PC-3 (cell line): ENCODE measurements at regions of chr12 and their contacts with region 1.

Region 1: GRCh38 chr12:55142669-55143565 is 16.7 kb downstream of the OR9K2 start:
- DNase-seq: peak; percentile 78
- ATAC-seq: peak; percentile 66
- H3K4me3 ChIP-seq: no peak overlapping the region
- H3K27ac ChIP-seq: no peak overlapping the region
- H3K4me1 ChIP-seq: no peaks in the 10 kb centered on the region
- H3K27me3 ChIP-seq: peaks cover 16% of the 10 kb centered on the region
- CTCF ChIP-seq: peak; percentile 89

Region 2: GRCh38 chr12:54701940-54702592 is 440.9 kb before region 1 on chr12:
- CTCF ChIA-PET with region 1: no interaction called
- POLR2A ChIA-PET with region 1: no interaction called
- intact Hi-C with region 1: loop called (anchors 2 kb)
- DNase-seq: peak; percentile 61
- ATAC-seq: peak; percentile 75
- H3K4me3 ChIP-seq: no peak overlapping the region
- H3K27ac ChIP-seq: no peak overlapping the region
- H3K4me1 ChIP-seq: no peaks in the 10 kb centered on the region
- H3K27me3 ChIP-seq: peaks cover 65% of the 10 kb centered on the region
- CTCF ChIP-seq: peak; percentile 70

Region 3: DNA sequence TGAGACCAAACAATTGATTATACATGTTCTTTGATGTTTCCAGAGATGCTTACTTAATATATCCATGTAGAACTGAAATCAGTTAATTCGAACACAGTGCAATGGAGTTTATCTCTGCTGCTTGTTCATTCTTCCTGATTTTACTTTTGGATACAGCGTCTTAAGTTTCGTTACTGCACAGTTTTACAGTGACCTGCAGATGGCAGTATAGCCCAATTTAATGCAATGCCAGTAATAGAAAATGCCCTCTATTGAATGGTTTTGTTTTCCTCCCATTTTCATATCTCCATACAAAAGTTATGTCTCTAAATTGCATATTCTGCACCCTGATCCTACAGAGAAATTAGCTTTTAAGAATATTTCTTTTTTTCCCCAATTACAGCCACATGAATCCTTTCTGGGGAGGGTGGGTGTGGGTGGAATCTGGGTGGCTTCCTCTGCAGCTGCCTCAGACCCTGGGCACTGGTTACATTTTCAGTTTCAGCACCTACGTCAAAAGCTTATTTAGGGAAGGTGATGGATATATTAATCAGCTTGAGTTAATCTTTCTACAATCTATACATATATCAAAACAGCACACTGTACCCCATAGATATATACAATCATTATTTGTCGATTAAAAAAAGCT is 393.6 kb before region 1 on chr12:
- CTCF ChIA-PET with region 1: no interaction called
- POLR2A ChIA-PET with region 1: no interaction called
- intact Hi-C with region 1: loop called (anchors 1 kb)
- DNase-seq: peak; percentile 65
- ATAC-seq: peak; percentile 73
- H3K4me3 ChIP-seq: no peak overlapping the region
- H3K27ac ChIP-seq: no peak overlapping the region
- H3K4me1 ChIP-seq: no peaks in the 10 kb centered on the region
- H3K27me3 ChIP-seq: peaks cover 12% of the 10 kb centered on the region; the same call in 1 of the 2 replicates
- CTCF ChIP-seq: peak; percentile 88

Region 4: GRCh38 chr12:54993161-54993835 is 149.6 kb before region 1 on chr12:
- CTCF ChIA-PET with region 1: interaction called, 5 read pairs
- POLR2A ChIA-PET with region 1: no interaction called
- intact Hi-C with region 1: loop called (anchors 1 kb)
- DNase-seq: peak; percentile 81
- ATAC-seq: peak; percentile 95
- H3K4me3 ChIP-seq: no peak overlapping the region
- H3K27ac ChIP-seq: no peak overlapping the region
- H3K4me1 ChIP-seq: no peaks in the 10 kb centered on the region
- H3K27me3 ChIP-seq: peaks cover 66% of the 10 kb centered on the region
- CTCF ChIP-seq: peak; percentile 89

Region 5: GRCh38 chr12:55226523-55226922 is 83.6 kb after region 1 on chr12:
- CTCF ChIA-PET with region 1: no interaction called
- POLR2A ChIA-PET with region 1: no interaction called
- intact Hi-C with region 1: no loop called
- DNase-seq: no peak
- ATAC-seq: no peak
- H3K4me3 ChIP-seq: no peak overlapping the region
- H3K27ac ChIP-seq: no peak overlapping the region
- H3K4me1 ChIP-seq: no peaks in the 10 kb centered on the region
- H3K27me3 ChIP-seq: peaks cover 54% of the 10 kb centered on the region
- CTCF ChIP-seq: no peak